Endothelial cell of umbilical vein (primary cell): ENCODE measurements at regions of chr7 and their contacts with region 1.

Region 1: GRCh38 chr7:66681491-66682349 is 53.0 kb downstream of the KCTD7 start:
- DNase-seq: peak; percentile 94
- H3K4me3 ChIP-seq: peak overlapping the region; percentile 41 to 80 (median 49)
- H3K27ac ChIP-seq: peak overlapping the region; percentile 79
- H3K4me1 ChIP-seq: peaks cover 4% of the 10 kb centered on the region
- H3K27me3 ChIP-seq: no peaks in the 10 kb centered on the region
- CTCF ChIP-seq: no peak
- POLR2A ChIP-seq: peak; percentile 87

Region 2: GRCh38 chr7:66628361-66629140 is 53.2 kb before region 1 on chr7 and contains the start of gene KCTD7:
- CTCF ChIA-PET with region 1: no interaction called
- POLR2A ChIA-PET with region 1: no interaction called
- dilution Hi-C with region 1: no loop called
- intact Hi-C with region 1: loop called (anchors 1 kb)
- DNase-seq: peak; percentile 99
- H3K4me3 ChIP-seq: peak within 1 kb of the TSS; percentile 70 to 90 (median 71)
- H3K27ac ChIP-seq: peak within 1 kb of the TSS; percentile 64
- H3K4me1 ChIP-seq: peaks cover 5% of the 10 kb centered on the region
- H3K27me3 ChIP-seq: no peaks in the 10 kb centered on the region
- CTCF ChIP-seq: no peak
- POLR2A ChIP-seq: peak; percentile 91
- total RNA-seq, gene KCTD7: 8.7 and 11.3 TPM in 2 replicates

Region 3: GRCh38 chr7:66654123-66654732 is 27.5 kb before region 1 on chr7:
- CTCF ChIA-PET with region 1: interaction called, 3 read pairs
- POLR2A ChIA-PET with region 1: no interaction called
- dilution Hi-C with region 1: no loop called
- intact Hi-C with region 1: loop called (anchors 2 kb)
- DNase-seq: peak; percentile 98
- H3K4me3 ChIP-seq: peak overlapping the region; percentile 48 to 84 (median 56)
- H3K27ac ChIP-seq: peak overlapping the region; percentile 96
- H3K4me1 ChIP-seq: peaks cover 3% of the 10 kb centered on the region
- H3K27me3 ChIP-seq: no peaks in the 10 kb centered on the region
- CTCF ChIP-seq: peak; percentile 8 to 32
- POLR2A ChIP-seq: peak; percentile 95

Region 4: DNA sequence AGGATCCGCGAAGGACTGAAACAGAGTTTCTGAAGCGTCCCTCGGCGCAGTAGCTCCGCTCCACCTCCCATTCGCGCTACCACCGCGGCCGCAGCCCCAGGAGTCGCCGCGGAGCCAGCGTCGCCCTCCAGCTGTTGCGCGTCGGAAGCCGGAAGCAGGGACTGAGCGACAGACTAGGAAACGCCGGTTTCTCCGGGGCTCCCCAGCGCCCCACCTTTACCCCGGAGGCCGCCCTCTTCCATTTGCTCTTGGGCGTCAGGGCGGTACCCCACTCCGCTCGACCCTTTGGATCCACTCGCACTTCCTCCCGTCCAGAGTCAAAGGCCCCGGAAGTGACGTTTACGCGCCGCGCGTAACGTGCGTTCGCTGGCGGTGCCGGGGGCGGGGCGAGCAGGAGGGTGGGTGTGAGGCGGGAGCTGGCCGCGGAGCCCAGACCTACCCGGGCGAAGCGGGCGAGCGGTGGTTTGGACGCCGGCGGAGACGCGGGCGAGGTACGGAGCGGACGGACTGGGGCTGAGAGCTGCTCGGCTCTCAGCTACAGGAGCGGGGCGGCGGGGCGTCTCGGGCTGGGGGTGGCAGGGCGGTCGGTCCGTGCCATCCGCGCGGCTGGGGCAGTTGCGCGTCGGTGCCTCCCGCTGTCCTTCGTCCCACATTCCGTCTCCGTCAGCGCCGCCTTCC is 58.7 kb after region 1 on chr7 and contains the start of gene RABGEF1:
- CTCF ChIA-PET with region 1: no interaction called
- POLR2A ChIA-PET with region 1: no interaction called
- dilution Hi-C with region 1: no loop called
- intact Hi-C with region 1: loop called (anchors 1 kb)
- DNase-seq: peak; percentile 94
- H3K4me3 ChIP-seq: peak within 1 kb of the TSS; percentile 81 to 99 (median 82)
- H3K27ac ChIP-seq: peak within 1 kb of the TSS; percentile 83
- H3K4me1 ChIP-seq: peaks cover 5% of the 10 kb centered on the region
- H3K27me3 ChIP-seq: no peaks in the 10 kb centered on the region
- CTCF ChIP-seq: no peak
- POLR2A ChIP-seq: peak; percentile 64
- total RNA-seq, gene RABGEF1: 14.4 and 15.5 TPM in 2 replicates